ENCODE measurements at regions of chr21 and their contacts with region 1.

Region 1: DNA sequence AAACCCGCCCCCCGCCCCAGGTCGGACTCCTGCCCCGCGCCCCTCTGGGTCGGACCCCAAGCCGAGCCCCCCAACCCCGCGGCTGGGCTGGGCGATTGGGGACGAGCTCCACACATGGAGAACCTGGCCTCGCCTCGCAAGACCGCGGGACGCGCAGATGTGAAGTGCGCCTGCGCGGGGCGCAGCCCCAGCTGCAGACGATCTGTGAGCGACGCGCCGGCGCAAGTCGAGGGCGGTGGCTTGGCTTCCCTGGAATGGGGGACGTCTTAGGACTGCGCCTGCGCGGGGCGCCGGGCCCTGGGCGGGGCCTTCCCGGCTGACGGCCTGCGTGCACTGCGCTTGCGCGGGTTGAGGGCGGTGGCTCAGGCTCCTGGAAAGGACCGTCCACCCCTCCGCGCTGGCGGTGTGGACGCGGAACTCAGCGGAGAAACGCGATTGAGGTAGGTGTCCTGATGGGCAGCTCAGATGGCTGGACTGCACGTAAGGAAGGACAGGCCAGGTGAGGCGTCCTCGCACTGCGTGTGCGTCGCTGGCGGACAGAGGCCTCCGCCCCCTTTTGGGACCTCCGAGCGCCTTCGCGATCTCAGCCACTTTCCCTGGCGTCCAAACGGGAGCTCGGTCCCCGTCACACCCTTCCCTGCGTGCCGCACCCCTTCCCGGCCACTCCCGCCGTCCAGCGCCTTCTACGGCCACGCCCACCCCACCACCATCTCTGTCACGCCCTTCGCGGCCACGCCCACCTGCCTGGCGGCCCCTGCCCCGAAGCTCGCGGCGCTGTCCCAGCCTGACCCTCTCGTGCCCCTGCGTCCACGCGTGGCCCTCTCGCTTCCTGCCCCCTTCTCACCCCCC is at the start of gene PRMT2:
- DNase-seq: peak; percentile 93 to 99 (median 97)
- ATAC-seq: peak; percentile 81 to 93 (median 85)
- H3K4me3 ChIP-seq: peak within 1 kb of the TSS; percentile 99 to 100
- H3K4me3 Mint-ChIP-seq: peak within 1 kb of the TSS; percentile 95 to 100 (median 97)
- H3K27ac ChIP-seq: peak within 1 kb of the TSS; percentile 93
- H3K27ac Mint-ChIP-seq: peak within 1 kb of the TSS; percentile 93 to 98
- H3K4me1 ChIP-seq: peaks cover 33 to 52% of the 10 kb centered on the region in 2 experiments
- H3K4me1 Mint-ChIP-seq: peaks cover 78 to 80% (median 79%) of the 10 kb centered on the region in 3 donors
- H3K27me3 ChIP-seq: no peaks in the 10 kb centered on the region
- H3K27me3 Mint-ChIP-seq: no peaks in the 10 kb centered on the region
- total RNA-seq, gene PRMT2: 145 to 258 (median 205) TPM

Region 2: DNA sequence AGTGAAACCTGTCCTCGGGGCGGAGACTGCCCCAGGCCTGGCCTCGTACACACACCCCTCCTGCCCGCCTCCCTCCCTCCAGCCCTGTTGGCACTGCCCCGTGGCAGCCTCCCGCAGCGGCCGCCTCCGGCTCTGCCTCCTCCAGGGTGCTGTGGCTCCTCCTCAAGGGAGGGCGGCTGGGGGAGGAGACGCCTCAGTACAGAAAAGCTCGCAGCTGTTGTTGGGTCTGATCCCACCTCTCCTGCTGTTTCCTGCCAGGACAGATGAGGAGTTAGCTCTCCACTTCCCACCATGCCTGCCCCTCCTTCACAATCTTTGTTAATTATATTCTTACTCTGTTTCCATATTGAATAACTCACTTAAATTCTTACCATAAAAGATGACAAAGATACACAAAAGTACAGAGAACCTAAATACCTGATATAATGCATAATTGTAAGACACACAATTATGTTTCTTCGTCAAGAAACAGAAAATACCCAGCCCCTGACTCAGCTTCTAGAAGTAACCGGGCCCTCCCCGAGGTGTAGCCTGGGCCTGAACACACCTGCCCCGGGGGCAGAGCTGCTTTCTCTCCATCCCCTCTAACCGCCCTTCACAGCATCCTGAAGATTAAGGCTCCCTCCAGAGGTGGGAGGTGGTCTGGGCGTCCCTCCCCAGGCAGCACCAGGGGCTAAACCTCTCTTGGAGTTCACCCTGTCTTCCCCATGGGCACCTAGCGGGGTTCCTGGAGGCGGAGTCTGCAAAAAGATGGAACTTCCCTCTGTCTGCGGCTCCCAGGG is 684.6 kb before region 1 on chr21:
- CTCF ChIA-PET with region 1: no interaction called
- POLR2A ChIA-PET with region 1: no interaction called
- DNase-seq: no peak
- ATAC-seq: no peak
- H3K4me3 ChIP-seq: no peak overlapping the region
- H3K4me3 Mint-ChIP-seq: no peak overlapping the region
- H3K27ac ChIP-seq: no peak overlapping the region
- H3K27ac Mint-ChIP-seq: no peak overlapping the region
- H3K4me1 ChIP-seq: no peaks in the 10 kb centered on the region
- H3K4me1 Mint-ChIP-seq: no peaks in the 10 kb centered on the region
- H3K27me3 ChIP-seq: peaks cover 0 to 33% of the 10 kb centered on the region in 2 experiments
- H3K27me3 Mint-ChIP-seq: peaks cover 4 to 20% of the 10 kb centered on the region in 2 donors

Region 3: DNA sequence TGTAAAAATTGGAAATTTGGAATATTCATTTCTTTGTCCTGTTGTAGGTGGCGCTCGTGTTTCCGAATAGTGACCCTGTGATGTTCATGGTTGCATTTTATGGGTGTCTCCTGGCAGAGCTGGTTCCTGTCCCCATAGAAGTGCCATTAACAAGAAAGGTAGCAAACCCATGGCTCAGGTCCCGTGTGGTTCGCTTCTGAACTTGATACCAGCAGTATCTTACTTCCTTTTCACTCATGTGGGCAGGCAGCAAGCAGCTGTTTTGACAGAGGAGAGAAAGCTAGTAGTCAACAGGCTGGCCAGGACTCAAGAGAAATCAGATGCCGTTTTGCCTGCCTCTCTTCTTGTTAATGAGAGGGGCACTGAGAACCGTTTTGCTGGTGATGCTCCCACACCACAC is 103.5 kb before region 1 on chr21:
- CTCF ChIA-PET with region 1: interaction called, 3 to 12 read pairs
- POLR2A ChIA-PET with region 1: interaction called in 1 of 2 experiments, 3 read pairs
- DNase-seq: peak in 33 of 35 experiments; percentile 8 to 72 (median 36)
- ATAC-seq: peak; percentile 76 to 96 (median 93)
- H3K4me3 ChIP-seq: no peak overlapping the region
- H3K4me3 Mint-ChIP-seq: peak overlapping the region in 2 of 3 donors; percentile 18 to 23
- H3K27ac ChIP-seq: no peak overlapping the region
- H3K27ac Mint-ChIP-seq: peak overlapping the region; percentile 91 to 95
- H3K4me1 ChIP-seq: peaks cover 8 to 16% of the 10 kb centered on the region in 2 experiments
- H3K4me1 Mint-ChIP-seq: peaks cover 45 to 50% (median 47%) of the 10 kb centered on the region in 3 donors
- H3K27me3 ChIP-seq: no peaks in the 10 kb centered on the region
- H3K27me3 Mint-ChIP-seq: no peaks in the 10 kb centered on the region

Region 4: DNA sequence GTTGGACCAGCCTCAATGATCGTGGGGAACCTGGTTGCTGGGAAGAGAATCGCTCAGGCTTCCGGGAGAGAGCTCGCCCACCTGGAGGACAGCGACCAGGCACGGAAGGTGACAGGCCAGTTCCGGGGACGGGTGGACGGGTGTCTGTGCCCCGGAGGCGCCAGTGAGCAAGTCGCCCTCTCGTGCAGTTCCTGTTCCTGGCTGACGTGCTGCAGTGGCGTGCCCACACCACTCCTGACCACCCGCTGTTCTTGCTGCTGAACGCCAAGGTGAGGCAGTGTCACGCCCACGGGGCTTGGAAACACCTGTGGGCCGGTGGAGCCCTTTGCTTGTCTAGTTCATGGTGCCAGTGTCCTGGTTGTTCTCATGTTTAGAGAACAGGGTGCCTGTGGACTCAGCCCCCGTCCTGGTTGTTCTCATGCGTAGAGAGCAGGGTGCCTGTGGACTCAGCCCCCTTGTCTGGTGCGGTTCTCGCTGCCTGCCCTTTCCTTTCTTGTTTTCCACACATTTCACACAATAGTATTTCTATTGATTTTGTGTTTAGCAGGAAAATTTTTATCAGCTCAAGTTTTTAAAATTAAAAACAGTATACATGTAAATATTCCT is 83.8 kb before region 1 on chr21:
- CTCF ChIA-PET with region 1: interaction called in 1 of 2 experiments, 25 read pairs
- POLR2A ChIA-PET with region 1: interaction called, 3 to 4 read pairs
- DNase-seq: peak in 30 of 35 experiments; percentile 6 to 57 (median 31)
- ATAC-seq: peak; percentile 9 to 26 (median 22)
- H3K4me3 ChIP-seq: peak overlapping the region in 1 of 2 donors; percentile 14
- H3K4me3 Mint-ChIP-seq: peak overlapping the region; percentile 57 to 84 (median 72)
- H3K27ac ChIP-seq: peak overlapping the region; percentile 85
- H3K27ac Mint-ChIP-seq: peak overlapping the region; percentile 97 to 99
- H3K4me1 ChIP-seq: peaks cover 50 to 69% of the 10 kb centered on the region in 2 experiments
- H3K4me1 Mint-ChIP-seq: peaks cover 77 to 82% (median 78%) of the 10 kb centered on the region in 3 donors
- H3K27me3 ChIP-seq: no peaks in the 10 kb centered on the region
- H3K27me3 Mint-ChIP-seq: no peaks in the 10 kb centered on the region

Region 5: GRCh38 chr21:46559291-46559983 is 76.1 kb before region 1 on chr21:
- CTCF ChIA-PET with region 1: interaction called in 1 of 2 experiments, 4 read pairs
- POLR2A ChIA-PET with region 1: interaction called, 11 to 15 read pairs
- DNase-seq: peak; percentile 37 to 79 (median 61)
- ATAC-seq: peak; percentile 78 to 84 (median 80)
- H3K4me3 ChIP-seq: peak overlapping the region; percentile 28 to 46
- H3K4me3 Mint-ChIP-seq: peak overlapping the region; percentile 73 to 80 (median 73)
- H3K27ac ChIP-seq: peak overlapping the region; percentile 85
- H3K27ac Mint-ChIP-seq: peak overlapping the region; percentile 98 to 100
- H3K4me1 ChIP-seq: peaks cover 53 to 87% of the 10 kb centered on the region in 2 experiments
- H3K4me1 Mint-ChIP-seq: peaks cover 74 to 85% (median 76%) of the 10 kb centered on the region in 3 donors
- H3K27me3 ChIP-seq: no peaks in the 10 kb centered on the region
- H3K27me3 Mint-ChIP-seq: no peaks in the 10 kb centered on the region

Region 6: GRCh38 chr21:46650476-46651098 is 15.0 kb after region 1 on chr21:
- CTCF ChIA-PET with region 1: no interaction called
- POLR2A ChIA-PET with region 1: no interaction called
- DNase-seq: no peak
- ATAC-seq: no peak
- H3K4me3 ChIP-seq: no peak overlapping the region
- H3K4me3 Mint-ChIP-seq: no peak overlapping the region
- H3K27ac ChIP-seq: no peak overlapping the region
- H3K27ac Mint-ChIP-seq: no peak overlapping the region
- H3K4me1 ChIP-seq: peaks cover 0 to 30% of the 10 kb centered on the region in 2 experiments
- H3K4me1 Mint-ChIP-seq: peaks cover 39 to 53% (median 46%) of the 10 kb centered on the region in 3 donors
- H3K27me3 ChIP-seq: no peaks in the 10 kb centered on the region
- H3K27me3 Mint-ChIP-seq: no peaks in the 10 kb centered on the region

Measured in T-cell (primary cell).